Ascending aorta (tissue), 2 donors: ENCODE measurements at regions of chr10 and their contacts with region 1.

Region 1: GRCh38 chr10:29946953-29947700 is 112.3 kb downstream of the JCAD start:
- DNase-seq: peak; percentile 55 to 92
- H3K4me3 ChIP-seq: peak overlapping the region in 1 of 2 donors; percentile 39
- H3K27ac ChIP-seq: peak overlapping the region; percentile 85 to 90
- H3K4me1 ChIP-seq: peaks cover 17 to 42% of the 10 kb centered on the region in 2 donors
- H3K27me3 ChIP-seq: no peaks in the 10 kb centered on the region
- CTCF ChIP-seq: no peak

Region 2: DNA sequence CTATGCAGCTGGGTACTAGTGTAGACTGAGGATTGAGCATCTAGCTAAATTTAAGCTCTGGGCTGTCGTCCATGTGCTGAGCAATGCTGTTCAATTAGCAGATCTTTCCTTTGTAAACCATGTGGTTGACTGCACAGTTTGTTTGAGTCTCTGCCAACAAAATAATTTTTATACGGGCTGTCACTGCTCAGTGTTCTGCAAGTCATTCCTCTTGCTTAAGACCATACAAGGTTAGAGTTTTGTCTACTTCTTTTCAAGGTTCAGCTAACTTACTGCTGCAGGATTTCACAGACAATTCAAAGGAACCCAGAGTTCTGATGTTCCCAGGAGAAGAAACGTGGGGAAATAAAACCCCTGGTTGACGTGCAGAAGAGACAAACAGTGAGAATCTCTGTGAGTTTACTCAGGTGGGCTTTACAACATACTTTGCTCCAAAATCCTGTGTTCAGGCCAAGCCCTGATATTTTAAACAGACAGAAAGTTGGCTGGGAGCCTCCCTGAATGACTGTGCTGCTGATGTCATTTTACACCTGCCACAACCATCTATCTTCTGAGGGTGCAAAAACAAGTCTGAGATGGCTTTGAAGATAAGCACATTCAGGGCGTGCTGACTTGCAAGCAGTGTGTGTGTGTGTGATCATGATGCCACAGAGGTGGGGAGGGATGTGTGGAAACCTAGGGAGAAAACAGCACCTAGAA is 135.2 kb before region 1 on chr10:
- intact Hi-C with region 1: loop called (anchors 5 kb)
- DNase-seq: peak; percentile 32 to 90
- H3K4me3 ChIP-seq: no peak overlapping the region
- H3K27ac ChIP-seq: peak overlapping the region; percentile 86 to 93
- H3K4me1 ChIP-seq: peaks cover 3 to 24% of the 10 kb centered on the region in 2 donors
- H3K27me3 ChIP-seq: no peaks in the 10 kb centered on the region
- CTCF ChIP-seq: no peak

Region 3: GRCh38 chr10:29857843-29858701 is 89.1 kb before region 1 on chr10:
- intact Hi-C with region 1: loop called (anchors 5 kb)
- DNase-seq: peak in 1 of 2 donors; percentile 91
- H3K4me3 ChIP-seq: peak overlapping the region in 1 of 2 donors; percentile 15
- H3K27ac ChIP-seq: peak overlapping the region; percentile 66 to 68
- H3K4me1 ChIP-seq: peaks cover 9 to 16% of the 10 kb centered on the region in 2 donors
- H3K27me3 ChIP-seq: no peaks in the 10 kb centered on the region
- CTCF ChIP-seq: peak; percentile 65 to 84 (median 81)

Region 4: DNA sequence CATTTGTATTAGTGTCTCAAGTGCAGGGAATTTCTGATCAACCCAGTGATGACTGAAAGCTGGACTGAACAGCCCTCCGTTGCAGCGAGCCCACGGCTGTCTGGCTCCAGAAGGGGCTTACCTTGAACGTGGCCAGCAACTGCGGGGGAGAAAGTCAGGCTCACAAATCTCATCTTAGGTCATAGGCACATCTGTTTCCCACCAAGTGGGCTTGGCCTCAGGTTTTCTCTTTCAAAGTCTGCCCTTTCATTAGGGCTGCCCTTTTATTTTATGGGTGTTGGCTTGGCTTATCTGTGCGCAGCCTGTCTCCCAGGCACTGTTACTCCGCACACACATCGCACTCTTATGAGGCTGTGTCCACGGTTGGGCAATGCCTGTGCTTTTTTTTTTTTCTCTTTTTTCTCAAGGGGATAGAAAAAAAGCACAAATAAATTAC is 65.8 kb before region 1 on chr10:
- intact Hi-C with region 1: loop called (anchors 2 kb)
- DNase-seq: peak in 1 of 2 donors; percentile 79
- H3K4me3 ChIP-seq: no peak overlapping the region
- H3K27ac ChIP-seq: peak overlapping the region; percentile 95 to 98
- H3K4me1 ChIP-seq: peaks cover 18 to 55% of the 10 kb centered on the region in 2 donors
- H3K27me3 ChIP-seq: no peaks in the 10 kb centered on the region
- CTCF ChIP-seq: no peak

Region 5: GRCh38 chr10:29895456-29895855 is 51.7 kb before region 1 on chr10:
- intact Hi-C with region 1: loop called (anchors 2 kb)
- DNase-seq: peak; percentile 33 to 93
- H3K4me3 ChIP-seq: peak overlapping the region; percentile 17 to 19
- H3K27ac ChIP-seq: peak overlapping the region; percentile 87 to 89
- H3K4me1 ChIP-seq: peaks cover 0 to 24% of the 10 kb centered on the region in 2 donors
- H3K27me3 ChIP-seq: no peaks in the 10 kb centered on the region
- CTCF ChIP-seq: no peak

Region 6: GRCh38 chr10:29980084-29980483 is 33.0 kb after region 1 on chr10:
- intact Hi-C with region 1: loop called (anchors 2 kb)
- DNase-seq: peak in 1 of 2 donors; percentile 59
- H3K4me3 ChIP-seq: no peak overlapping the region
- H3K27ac ChIP-seq: peak overlapping the region; percentile 70 to 84
- H3K4me1 ChIP-seq: peaks cover 10 to 18% of the 10 kb centered on the region in 2 donors
- H3K27me3 ChIP-seq: no peaks in the 10 kb centered on the region
- CTCF ChIP-seq: no peak